ENCODE measurements at regions of chr19 and their contacts with region 1.

Region 1: DNA sequence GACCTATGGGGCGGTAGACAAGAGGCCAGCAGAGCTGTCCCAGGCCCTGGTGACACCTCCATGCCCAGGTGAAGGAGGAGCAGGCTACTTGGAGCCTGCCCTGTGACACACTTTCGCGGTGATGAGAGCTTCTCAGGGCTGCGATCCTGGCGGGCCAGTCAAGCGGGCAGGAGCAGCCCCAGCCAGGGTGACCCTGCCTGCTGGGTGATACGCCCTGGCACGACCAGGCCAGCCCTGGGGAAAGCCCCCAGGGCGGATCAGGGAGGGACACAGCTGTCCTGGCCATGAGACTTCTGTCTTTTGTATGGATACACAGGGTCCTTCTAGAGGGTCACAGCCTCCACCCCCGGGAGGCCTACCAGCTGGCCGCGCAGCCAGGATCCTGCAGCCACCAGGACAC is 13.0 kb downstream of the DNM2 start:
- DNase-seq: no peak
- H3K4me3 Mint-ChIP-seq: peak overlapping the region; percentile 26
- H3K27ac Mint-ChIP-seq: peak overlapping the region; percentile 84
- H3K4me1 Mint-ChIP-seq: peaks cover 50% of the 10 kb centered on the region
- H3K27me3 Mint-ChIP-seq: no peaks in the 10 kb centered on the region

Region 2: DNA sequence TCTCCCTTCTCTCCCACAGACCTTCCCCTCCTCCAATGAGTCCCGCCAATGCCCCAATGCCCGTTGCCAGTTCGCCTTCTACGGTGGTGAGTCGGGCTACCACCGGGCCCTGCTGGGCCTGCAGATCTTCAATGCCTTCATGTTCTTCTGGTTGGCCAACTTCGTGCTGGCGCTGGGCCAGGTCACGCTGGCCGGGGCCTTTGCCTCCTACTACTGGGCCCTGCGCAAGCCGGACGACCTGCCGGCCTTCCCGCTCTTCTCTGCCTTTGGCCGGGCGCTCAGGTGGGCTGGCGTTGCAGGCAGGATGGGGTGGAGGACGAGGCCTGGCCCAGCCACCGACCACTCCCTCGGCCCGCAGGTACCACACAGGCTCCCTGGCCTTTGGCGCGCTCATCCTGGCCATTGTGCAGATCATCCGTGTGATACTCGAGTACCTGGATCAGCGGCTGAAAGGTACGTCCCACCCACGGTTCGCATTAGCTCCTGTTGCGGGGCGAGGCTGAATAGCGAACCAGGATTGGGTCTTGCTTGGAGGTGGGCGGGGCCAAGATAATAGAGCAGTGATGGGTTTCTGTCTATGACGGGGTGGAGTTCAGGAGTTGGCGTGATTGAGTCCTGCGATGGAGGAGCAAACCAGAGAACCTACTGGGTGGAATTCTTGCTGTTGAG is 94.5 kb before region 1 on chr19:
- CTCF ChIA-PET with region 1: no interaction called
- POLR2A ChIA-PET with region 1: no interaction called
- intact Hi-C with region 1: no loop called
- DNase-seq: no peak
- H3K4me3 Mint-ChIP-seq: no peak overlapping the region
- H3K27ac Mint-ChIP-seq: no peak overlapping the region
- H3K4me1 Mint-ChIP-seq: peaks cover 5% of the 10 kb centered on the region
- H3K27me3 Mint-ChIP-seq: no peaks in the 10 kb centered on the region

Region 3: GRCh38 chr19:10760273-10760944 is 29.5 kb after region 1 on chr19:
- CTCF ChIA-PET with region 1: no interaction called
- POLR2A ChIA-PET with region 1: no interaction called
- intact Hi-C with region 1: loop called (anchors 1 kb)
- DNase-seq: peak; percentile 71
- H3K4me3 Mint-ChIP-seq: peak overlapping the region; percentile 71
- H3K27ac Mint-ChIP-seq: peak overlapping the region; percentile 86
- H3K4me1 Mint-ChIP-seq: peaks cover 83% of the 10 kb centered on the region
- H3K27me3 Mint-ChIP-seq: no peaks in the 10 kb centered on the region

Measured in activated CD4-positive, alpha-beta memory T cell treated with anti-CD3 and anti-CD28 coated beads for 36 hours (primary cell).